ENCODE measurements at regions of chr11 and their contacts with region 1.

Region 1: DNA sequence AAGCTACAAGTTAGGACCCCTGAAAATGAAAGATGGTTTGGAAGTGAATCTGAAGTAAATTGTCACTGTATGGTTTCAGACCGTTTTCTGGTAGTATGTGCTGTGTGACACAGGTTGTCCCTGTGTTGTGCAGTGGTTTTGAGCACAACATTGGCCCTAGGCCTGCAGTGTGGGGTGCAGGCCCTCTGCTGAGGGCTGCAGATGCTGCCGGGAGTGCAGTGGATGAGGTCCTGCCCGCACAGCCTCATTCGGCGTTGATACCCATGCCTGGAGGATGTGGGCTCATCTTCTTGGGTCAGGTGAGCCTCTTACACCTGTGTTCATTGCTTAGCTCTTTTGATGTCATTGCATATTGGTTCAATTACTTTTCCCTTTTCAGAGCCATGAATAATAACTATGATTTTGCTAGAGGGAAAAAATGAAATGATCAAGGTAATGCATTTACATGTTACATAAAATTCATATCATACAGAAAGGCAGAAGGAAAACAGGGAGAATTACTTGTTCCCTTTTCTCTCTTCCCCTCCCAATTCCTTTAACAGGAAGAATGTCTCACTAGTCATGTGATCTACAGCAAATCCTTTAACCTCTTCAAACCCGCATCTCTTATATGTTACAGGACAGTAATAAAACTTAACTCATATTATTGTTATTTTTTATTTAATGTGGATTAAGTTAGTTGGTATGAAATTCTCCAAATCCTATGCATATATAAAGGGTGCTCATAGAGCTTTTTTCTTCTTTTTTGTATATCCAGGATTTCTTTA is 48.7 kb downstream of the PTPRJ start:
- DNase-seq: no peak
- ATAC-seq: no peak

Region 2: GRCh38 chr11:47980245-47981049 is 48.6 kb before region 1 on chr11 and contains the start of gene PTPRJ:
- intact Hi-C with region 1: loop called (anchors 1 kb)
- DNase-seq: peak; percentile 82
- ATAC-seq: peak; percentile 81
- total RNA-seq, gene PTPRJ: 35.1 TPM

Region 3: GRCh38 chr11:48013269-48013901 is 15.7 kb before region 1 on chr11:
- intact Hi-C with region 1: no loop called
- DNase-seq: no peak
- ATAC-seq: peak; percentile 28

Region 4: DNA sequence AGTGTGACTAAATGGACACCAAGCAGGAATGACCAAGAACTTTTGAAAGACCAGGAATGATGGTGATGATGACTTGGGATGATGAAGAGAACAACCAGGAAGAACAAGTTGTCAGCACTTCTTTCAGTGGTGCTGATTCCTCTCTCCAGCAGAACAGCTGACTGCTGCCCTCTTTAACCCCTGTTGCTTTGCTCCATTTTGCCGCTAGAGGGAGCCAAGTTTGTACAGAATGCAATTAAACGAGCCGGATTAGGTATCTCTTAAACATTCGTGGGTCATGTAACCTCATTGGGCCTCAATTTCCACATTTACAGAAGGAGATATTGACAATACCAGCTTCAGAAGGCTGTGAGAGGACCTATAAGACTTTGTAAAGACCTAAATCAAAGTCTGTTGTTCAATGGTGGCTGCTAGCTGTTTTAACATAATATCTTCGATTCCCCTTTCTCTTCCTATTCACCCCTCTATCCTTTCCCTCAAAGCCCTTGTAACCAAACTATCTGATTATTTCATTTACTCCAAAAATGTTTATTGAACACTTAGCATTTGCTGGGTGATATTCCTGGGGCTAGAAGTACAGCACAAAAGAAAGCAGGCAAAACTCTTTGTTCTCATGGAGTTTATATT is 278.8 kb after region 1 on chr11:
- intact Hi-C with region 1: no loop called
- DNase-seq: peak; percentile 62
- ATAC-seq: no peak